ENCODE measurements at regions of chr2 and their contacts with region 1.

Region 1: DNA sequence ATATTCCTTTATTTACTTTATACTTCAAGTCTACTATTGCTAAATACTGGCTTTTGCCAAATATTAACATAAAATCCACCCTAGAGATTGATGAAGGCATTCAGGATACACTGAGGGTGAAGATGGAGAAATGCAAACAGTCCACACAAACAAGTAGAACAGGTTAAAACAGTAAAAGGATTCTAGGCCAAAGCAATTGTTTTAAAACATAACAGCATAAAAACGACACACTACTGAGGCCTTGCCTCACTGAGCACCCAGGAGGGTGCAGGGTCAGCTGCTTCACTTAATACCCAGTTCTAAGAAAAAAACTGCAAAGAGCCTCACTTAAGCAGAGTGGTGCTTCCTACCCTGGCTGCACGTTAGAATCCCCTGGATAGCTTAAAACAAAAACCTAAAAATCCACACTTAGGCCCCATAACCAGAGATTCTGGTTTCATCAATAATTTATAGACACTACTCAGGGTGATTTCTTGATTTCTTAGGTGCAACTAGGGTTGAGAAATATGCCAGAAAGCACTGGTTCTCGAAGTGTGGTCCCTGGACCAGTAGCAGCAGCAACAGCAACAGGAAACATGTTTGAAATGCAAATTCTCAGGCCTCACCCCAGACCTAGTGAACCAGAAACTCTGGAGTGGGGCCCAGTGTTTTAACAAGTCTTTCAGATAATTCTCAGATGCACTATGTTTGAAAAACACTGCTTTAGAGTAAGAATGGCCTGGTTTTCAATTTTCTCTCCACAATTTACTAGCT is 279.2 kb downstream of the ZEB2 start:
- DNase-seq: peak; percentile 92
- H3K4me3 ChIP-seq: peak overlapping the region; percentile 55
- H3K27ac ChIP-seq: peak overlapping the region; percentile 98
- H3K4me1 ChIP-seq: peaks cover 92% of the 10 kb centered on the region
- CTCF ChIP-seq: no peak

Region 2: GRCh38 chr2:144032566-144032965 is 208.2 kb before region 1 on chr2:
- CTCF ChIA-PET with region 1: no interaction called
- POLR2A ChIA-PET with region 1: no interaction called
- intact Hi-C with region 1: no loop called
- DNase-seq: no peak
- H3K4me3 ChIP-seq: no peak overlapping the region
- H3K27ac ChIP-seq: no peak overlapping the region
- H3K4me1 ChIP-seq: no peaks in the 10 kb centered on the region
- CTCF ChIP-seq: no peak

Region 3: GRCh38 chr2:144230448-144231085 is 10.2 kb before region 1 on chr2:
- CTCF ChIA-PET with region 1: interaction called, 4 read pairs
- POLR2A ChIA-PET with region 1: interaction called, 20 read pairs
- intact Hi-C with region 1: no loop called
- DNase-seq: no peak
- H3K4me3 ChIP-seq: no peak overlapping the region
- H3K27ac ChIP-seq: no peak overlapping the region
- H3K4me1 ChIP-seq: peaks cover 39% of the 10 kb centered on the region
- CTCF ChIP-seq: no peak

Region 4: GRCh38 chr2:144332356-144333142 is 91.8 kb after region 1 on chr2:
- CTCF ChIA-PET with region 1: no interaction called
- POLR2A ChIA-PET with region 1: interaction called, 19 read pairs
- intact Hi-C with region 1: loop called (anchors 2 kb)
- DNase-seq: peak; percentile 93
- H3K4me3 ChIP-seq: peak overlapping the region; percentile 97
- H3K27ac ChIP-seq: peak overlapping the region; percentile 68
- H3K4me1 ChIP-seq: peaks cover 26% of the 10 kb centered on the region
- CTCF ChIP-seq: no peak

Region 5: DNA sequence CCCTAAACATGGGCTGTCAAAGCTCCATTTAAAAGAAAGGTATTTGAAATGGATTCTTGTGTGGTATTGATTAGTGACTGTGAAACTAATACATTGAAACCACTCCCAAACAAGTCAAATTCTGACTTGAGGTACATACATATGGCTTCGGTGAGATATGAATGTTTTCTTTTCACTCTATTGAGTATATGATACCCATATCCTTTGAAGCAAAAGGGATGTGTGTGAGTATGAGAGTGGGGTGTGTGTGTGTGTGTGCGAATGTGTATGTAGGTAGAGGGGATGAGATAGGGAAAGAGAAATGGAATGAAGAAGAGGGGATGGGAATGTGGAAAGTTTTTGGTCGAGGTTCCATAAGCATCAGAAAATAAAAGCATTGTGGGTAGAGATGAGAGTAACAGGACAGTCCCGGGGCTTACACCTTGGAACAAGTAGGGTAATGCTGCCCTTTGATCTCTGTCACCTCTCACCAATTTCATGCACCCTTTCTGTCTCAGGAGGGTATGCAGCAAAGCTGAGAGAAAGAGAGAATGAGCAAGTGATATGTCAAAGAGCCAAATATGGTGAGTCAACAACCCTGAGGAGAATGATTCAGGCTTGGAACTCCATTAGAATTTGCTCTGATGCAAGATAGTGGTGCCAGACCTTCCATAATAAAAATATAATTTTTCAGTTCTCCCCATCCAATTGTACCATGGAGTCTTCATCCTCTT is 343.1 kb after region 1 on chr2:
- CTCF ChIA-PET with region 1: no interaction called
- POLR2A ChIA-PET with region 1: no interaction called
- intact Hi-C with region 1: loop called (anchors 10 kb)
- DNase-seq: no peak
- H3K4me3 ChIP-seq: no peak overlapping the region
- H3K27ac ChIP-seq: no peak overlapping the region
- H3K4me1 ChIP-seq: peaks cover 42% of the 10 kb centered on the region
- CTCF ChIP-seq: no peak

Region 6: DNA sequence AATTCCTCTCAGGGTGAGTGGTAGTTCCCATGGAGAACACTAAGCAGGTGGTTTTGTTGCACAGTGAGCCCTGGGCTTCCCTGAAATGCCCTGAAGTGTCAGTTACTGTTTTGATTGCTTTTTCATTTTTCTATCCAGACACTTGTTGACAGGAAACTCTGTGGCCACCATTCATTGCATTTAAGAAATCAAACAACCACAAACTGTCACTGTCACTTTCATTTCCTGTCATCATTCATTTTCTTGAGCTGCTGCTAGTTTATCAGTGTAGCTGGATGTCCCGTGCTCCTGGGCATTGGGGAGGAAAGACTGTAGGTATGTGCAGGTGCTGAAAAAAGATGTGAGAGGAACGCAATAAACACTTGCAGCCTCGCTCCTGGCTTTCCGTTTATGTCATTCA is 1170.7 kb after region 1 on chr2:
- CTCF ChIA-PET with region 1: no interaction called
- POLR2A ChIA-PET with region 1: no interaction called
- intact Hi-C with region 1: loop called (anchors 2 kb)
- DNase-seq: peak; percentile 97
- H3K4me3 ChIP-seq: peak overlapping the region; percentile 43
- H3K27ac ChIP-seq: peak overlapping the region; percentile 99
- H3K4me1 ChIP-seq: peaks cover 41% of the 10 kb centered on the region
- CTCF ChIP-seq: no peak

Measured in OCI-LY7 (cell line).